Activated CD8-positive, alpha-beta T cell treated with anti-CD3 and anti-CD28 coated beads, Interleukin-2, amount 10 ng/mL, durations not matched to agents 7 days and 5 days (primary cell): ENCODE measurements at regions of chr4 and their contacts with region 1.

Region 1: DNA sequence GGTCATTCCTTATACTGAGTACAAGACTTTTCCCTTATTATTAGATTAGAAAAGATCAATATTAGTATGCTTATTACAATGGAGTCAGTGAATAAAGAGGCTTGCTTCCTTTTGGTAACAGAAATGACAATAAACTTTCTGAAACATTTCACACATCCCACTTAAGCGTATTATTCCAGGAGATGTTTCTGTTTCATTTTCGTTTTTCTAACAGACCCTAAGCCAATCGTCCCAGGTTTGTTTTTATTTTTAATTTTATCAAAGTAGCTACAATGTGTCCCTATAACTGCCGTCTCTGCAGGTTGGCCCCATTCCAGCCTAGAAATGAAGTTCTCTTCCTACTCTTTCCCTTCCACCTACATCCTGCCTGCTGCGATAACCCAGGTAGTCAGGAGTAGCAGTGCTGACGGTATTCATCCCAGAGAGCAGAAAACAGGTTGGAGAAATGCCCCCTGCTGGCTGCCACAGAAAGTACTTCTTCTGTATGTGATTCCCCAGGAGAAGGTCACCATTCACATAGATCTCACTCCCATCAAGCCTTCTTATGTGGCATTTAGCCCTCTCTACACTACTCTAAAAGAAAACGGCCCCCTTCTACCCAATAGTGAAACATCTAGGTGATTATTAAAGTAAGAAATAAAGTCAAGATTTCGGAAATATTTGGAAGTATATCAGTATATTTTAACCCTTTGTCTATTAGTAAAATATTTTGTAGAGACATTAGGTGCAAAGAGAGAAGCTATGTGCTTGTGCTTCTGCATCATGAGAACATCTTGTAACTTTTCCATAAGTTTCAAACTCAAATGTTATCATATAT is 40.4 kb downstream of the ENPEP start:
- DNase-seq: peak; percentile 77
- ATAC-seq: peak; percentile 95
- H3K4me3 Mint-ChIP-seq: peak overlapping the region; percentile 90
- H3K27ac Mint-ChIP-seq: no peak overlapping the region
- H3K4me1 Mint-ChIP-seq: peaks cover 6% of the 10 kb centered on the region
- H3K27me3 Mint-ChIP-seq: peaks cover 5% of the 10 kb centered on the region

Region 2: DNA sequence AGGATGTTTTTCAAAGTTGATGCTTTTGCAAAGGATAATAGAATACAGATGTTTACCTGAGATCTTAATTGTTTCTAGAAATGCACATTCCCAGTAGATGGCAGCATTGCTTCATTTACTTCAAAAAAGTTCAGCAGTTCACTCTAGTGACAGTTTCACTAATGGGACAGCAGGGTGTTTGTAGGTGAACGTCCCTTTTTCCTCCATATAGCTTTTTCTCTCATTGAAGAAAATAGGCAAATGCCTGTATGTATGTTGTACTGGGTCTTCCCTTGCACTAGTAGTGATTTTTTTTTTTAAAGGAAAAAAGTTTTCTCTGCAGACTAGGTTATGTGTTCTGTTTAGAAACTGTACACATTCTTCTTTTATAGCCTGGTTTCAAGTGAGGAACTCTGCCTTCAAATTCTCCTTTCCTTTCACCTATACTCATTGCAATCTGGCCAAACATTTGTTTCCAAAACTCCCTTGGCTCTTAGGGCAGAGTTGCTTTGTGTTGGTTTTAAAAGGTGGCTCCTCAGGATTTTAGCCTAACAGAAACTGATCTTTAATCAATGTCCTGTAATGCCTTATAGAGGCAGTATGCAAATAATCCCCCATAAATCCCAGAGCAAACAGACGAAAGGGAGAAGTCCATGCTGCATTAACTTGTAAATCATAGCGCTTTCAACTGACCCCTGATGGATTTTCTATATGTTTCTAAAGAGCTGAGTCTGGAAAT is 517.3 kb before region 1 on chr4:
- CTCF ChIA-PET with region 1: interaction called, 197 read pairs
- POLR2A ChIA-PET with region 1: no interaction called
- DNase-seq: peak; percentile 59
- ATAC-seq: peak; percentile 72
- H3K4me3 Mint-ChIP-seq: no peak overlapping the region
- H3K27ac Mint-ChIP-seq: no peak overlapping the region
- H3K4me1 Mint-ChIP-seq: peaks cover 18% of the 10 kb centered on the region
- H3K27me3 Mint-ChIP-seq: peaks cover 12% of the 10 kb centered on the region

Region 3: DNA sequence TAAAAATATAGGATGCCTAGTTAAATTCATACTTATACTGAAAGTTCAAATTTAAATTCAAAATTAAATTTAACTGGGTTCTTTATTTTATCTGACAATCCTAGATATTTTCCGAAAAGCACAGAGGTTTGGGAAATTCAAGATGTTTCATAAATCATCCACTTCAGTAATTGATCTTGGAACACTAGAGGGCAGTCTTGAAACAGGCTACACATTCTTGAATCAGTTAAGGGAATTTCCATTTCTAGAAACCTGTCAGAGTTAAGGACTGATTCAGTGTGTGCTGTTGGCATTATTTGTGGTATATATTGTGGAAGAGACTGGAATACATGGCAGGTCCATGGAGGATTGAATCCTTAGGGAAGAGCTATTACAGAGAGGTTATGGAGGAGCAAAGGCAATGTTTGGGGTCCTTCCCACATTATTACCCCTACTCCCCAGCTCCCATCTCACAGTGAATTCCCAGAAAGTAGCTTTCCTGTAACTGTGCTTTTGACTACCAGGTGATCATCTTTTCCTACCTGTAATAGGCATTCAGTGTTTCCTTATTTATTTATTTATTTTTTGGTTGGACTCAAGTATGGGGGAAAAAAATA is 510.8 kb before region 1 on chr4:
- CTCF ChIA-PET with region 1: interaction called, 197 read pairs
- POLR2A ChIA-PET with region 1: no interaction called
- DNase-seq: no peak
- ATAC-seq: peak; percentile 64
- H3K4me3 Mint-ChIP-seq: no peak overlapping the region
- H3K27ac Mint-ChIP-seq: no peak overlapping the region
- H3K4me1 Mint-ChIP-seq: peaks cover 6% of the 10 kb centered on the region
- H3K27me3 Mint-ChIP-seq: peaks cover 17% of the 10 kb centered on the region

Region 4: GRCh38 chr4:110310795-110311194 is 205.5 kb before region 1 on chr4:
- CTCF ChIA-PET with region 1: interaction called, 12 read pairs
- POLR2A ChIA-PET with region 1: no interaction called
- DNase-seq: no peak
- ATAC-seq: no peak
- H3K4me3 Mint-ChIP-seq: no peak overlapping the region
- H3K27ac Mint-ChIP-seq: no peak overlapping the region
- H3K4me1 Mint-ChIP-seq: no peaks in the 10 kb centered on the region
- H3K27me3 Mint-ChIP-seq: peaks cover 10% of the 10 kb centered on the region